Motor neuron (in vitro differentiated cells): ENCODE measurements at regions of chr13 and their contacts with region 1.

Region 1: DNA sequence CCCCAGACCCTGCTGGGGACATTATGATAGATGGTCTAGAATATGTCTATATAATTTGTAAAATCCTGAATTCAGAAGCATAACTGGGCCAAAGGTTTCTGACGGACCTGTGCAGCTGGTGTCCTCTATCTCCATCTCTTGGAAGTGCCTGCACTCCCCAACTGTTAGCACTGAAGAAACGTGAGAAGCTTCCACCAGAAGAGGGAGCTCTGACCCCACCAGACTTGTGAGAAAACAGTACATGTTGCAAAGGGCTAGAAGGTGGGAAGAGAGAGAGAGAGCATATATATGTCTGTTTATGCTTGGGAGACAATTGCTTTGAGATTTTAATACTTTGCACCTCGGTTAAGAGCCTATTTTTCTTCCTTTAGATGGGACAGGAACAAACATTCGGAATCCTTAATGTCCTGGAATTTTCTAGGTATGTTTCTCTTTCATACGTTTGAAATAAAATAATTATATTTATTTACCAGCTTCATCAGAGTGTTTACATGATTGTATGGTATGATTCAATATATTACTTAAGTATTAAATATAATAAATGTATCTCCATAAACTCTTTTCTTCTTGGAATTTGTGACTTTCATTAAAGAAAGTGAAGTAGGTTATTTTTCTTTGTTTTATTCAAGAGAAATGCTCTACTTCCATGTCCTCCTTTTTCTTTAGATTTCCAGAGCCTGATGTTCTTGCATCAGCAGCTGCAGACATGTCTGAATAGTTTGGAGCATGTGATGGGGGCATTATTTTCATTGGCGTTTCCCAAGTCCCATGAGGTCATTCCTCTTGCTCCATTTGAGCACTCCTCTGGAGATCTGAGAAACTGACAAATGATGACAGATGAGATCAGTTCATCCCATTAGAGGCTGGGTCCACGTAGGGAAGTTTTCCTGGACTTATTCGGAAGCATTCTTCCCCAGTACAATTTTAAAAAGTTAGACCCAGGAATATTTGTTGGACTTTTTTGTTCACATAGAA is 202.9 kb downstream of the ATP8A2 start:
- ATAC-seq: peak; percentile 95 to 99 (median 99)
- H3K4me3 ChIP-seq: no peak overlapping the region
- H3K27ac ChIP-seq: no peak overlapping the region
- H3K4me1 ChIP-seq: no peaks in the 10 kb centered on the region

Region 2: GRCh38 chr13:25118378-25118777 is 456.3 kb before region 1 on chr13:
- in situ Hi-C with region 1: no loop called
- ATAC-seq: no peak
- H3K4me3 ChIP-seq: no peak overlapping the region
- H3K27ac ChIP-seq: no peak overlapping the region
- H3K4me1 ChIP-seq: no peaks in the 10 kb centered on the region

Region 3: GRCh38 chr13:25232937-25233515 is 341.7 kb before region 1 on chr13:
- in situ Hi-C with region 1: no loop called
- ATAC-seq: peak in 4 of 8 experiments; percentile 42 to 72 (median 67)
- H3K4me3 ChIP-seq: no peak overlapping the region
- H3K27ac ChIP-seq: no peak overlapping the region
- H3K4me1 ChIP-seq: no peaks in the 10 kb centered on the region

Region 4: GRCh38 chr13:25806264-25806974 is 231.7 kb after region 1 on chr13:
- in situ Hi-C with region 1: loop called in 1 of 9 experiments (anchors 25 kb)
- ATAC-seq: no peak
- H3K4me3 ChIP-seq: no peak overlapping the region
- H3K27ac ChIP-seq: no peak overlapping the region
- H3K4me1 ChIP-seq: no peaks in the 10 kb centered on the region